HEK293 (cell line): ENCODE measurements at regions of chr10 and their contacts with region 1.

Region 1: DNA sequence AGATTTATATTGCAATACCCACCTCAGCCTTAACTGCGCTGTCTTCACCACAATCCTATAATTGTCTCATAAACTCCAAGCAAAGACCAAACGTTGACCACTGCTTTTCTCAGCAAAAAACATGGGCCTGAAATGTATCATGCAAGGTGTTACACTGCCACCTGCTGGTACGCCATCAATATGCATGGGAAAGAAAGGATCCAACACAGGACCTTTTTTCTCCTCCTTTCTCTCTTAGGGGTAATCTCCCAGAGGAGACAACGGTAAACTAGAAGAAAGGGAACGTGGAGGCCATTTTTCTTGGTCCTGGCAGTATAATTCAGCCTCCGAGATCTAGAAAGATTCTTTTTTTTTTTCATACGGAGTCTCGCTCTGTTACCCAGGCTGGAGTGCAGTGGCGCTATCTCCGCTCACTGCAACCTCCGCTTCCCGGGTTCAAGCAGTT is 79.1 kb upstream of the MPP7 start:
- H3K4me3 ChIP-seq: no peak overlapping the region
- H3K27ac ChIP-seq: no peak overlapping the region
- H3K4me1 ChIP-seq: peaks cover 6% of the 10 kb centered on the region; the same call in 1 of the 2 replicates
- CTCF ChIP-seq: peak; percentile 89

Region 2: DNA sequence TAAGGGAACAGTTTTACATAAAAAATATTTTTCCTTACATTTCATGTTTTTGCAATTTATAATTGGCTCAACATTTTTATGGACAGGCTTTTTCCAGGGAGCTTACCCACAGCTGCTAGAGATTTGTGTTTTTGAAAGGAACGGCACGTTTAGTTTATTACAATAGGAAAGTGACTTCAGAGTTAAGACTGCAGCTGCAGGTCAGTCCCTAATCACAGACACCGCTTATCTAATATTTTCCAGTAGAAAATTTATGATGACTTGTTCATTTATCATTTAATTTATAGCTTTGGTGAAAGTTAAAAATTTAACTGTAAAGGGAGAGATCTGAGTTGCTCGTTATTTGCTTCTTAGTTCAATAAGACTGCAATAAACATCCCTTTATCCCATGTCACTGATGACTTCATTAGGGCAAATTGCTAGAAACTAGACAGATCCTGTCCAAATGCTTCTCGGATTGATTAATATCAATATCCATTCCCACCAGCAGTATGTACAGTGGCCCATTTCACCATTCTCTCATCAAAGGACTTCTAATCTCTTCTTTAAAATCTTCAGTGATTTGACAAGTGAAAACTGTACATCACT is 286.0 kb before region 1 on chr10:
- CTCF ChIA-PET with region 1: no interaction called
- POLR2A ChIA-PET with region 1: no interaction called
- H3K4me3 ChIP-seq: no peak overlapping the region
- H3K27ac ChIP-seq: no peak overlapping the region
- H3K4me1 ChIP-seq: no peaks in the 10 kb centered on the region
- CTCF ChIP-seq: no peak

Region 3: DNA sequence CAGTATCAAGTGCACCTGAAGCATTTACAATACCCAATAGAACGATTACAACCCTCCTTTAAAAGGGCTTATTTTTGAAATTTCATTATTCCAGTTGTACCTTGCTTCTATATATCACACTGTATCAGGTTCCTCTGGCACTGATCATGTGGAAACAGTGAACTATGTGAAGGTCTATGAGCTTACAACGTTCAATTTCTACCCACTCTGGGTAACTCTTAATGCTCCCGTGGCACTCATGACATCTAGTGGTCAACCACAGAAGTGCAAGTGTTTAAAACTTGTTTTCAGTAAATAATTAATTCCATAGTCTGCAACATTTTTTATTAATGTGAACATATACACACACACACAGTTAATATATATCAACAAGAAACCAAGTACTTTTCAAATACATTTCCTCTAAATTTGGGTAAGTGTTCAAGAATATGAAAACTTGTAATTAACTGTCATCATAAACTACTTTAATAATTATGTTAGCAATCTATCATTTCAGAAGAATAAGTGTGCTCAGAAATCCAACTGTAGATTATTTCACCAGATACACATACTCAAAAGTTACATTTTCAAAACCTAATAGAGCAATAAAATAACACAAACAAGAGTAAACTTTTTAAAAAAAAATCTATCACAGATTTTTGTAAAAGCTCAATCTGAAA is 140.1 kb before region 1 on chr10:
- CTCF ChIA-PET with region 1: interaction called, 23 read pairs
- POLR2A ChIA-PET with region 1: no interaction called
- H3K4me3 ChIP-seq: no peak overlapping the region
- H3K27ac ChIP-seq: no peak overlapping the region
- H3K4me1 ChIP-seq: no peaks in the 10 kb centered on the region
- CTCF ChIP-seq: peak; percentile 59; the same call in 1 of the 2 replicates

Region 4: GRCh38 chr10:28250782-28251181 is 131.1 kb before region 1 on chr10:
- CTCF ChIA-PET with region 1: interaction called, 101 read pairs
- POLR2A ChIA-PET with region 1: no interaction called
- H3K4me3 ChIP-seq: no peak overlapping the region
- H3K27ac ChIP-seq: no peak overlapping the region
- H3K4me1 ChIP-seq: peaks cover 9% of the 10 kb centered on the region
- CTCF ChIP-seq: no peak

Region 5: GRCh38 chr10:28302638-28303488 is 79.1 kb before region 1 on chr10 and contains the start of gene MPP7:
- CTCF ChIA-PET with region 1: interaction called, 14 read pairs
- POLR2A ChIA-PET with region 1: interaction called, 5 read pairs
- H3K4me3 ChIP-seq: peak within 1 kb of the TSS; percentile 81
- H3K27ac ChIP-seq: peak within 1 kb of the TSS; percentile 90
- H3K4me1 ChIP-seq: peaks cover 6% of the 10 kb centered on the region; the same call in 1 of the 2 replicates
- CTCF ChIP-seq: no peak; the same call in 1 of the 2 replicates

Region 6: GRCh38 chr10:28326516-28327490 is 55.1 kb before region 1 on chr10:
- CTCF ChIA-PET with region 1: interaction called, 29 read pairs
- POLR2A ChIA-PET with region 1: no interaction called
- H3K4me3 ChIP-seq: no peak overlapping the region
- H3K27ac ChIP-seq: no peak overlapping the region; the same call in 1 of the 2 replicates
- H3K4me1 ChIP-seq: peaks cover 12% of the 10 kb centered on the region
- CTCF ChIP-seq: no peak

Region 7: GRCh38 chr10:28393966-28394568 is 12.1 kb after region 1 on chr10:
- CTCF ChIA-PET with region 1: interaction called, 43 read pairs
- POLR2A ChIA-PET with region 1: no interaction called
- H3K4me3 ChIP-seq: no peak overlapping the region
- H3K27ac ChIP-seq: no peak overlapping the region
- H3K4me1 ChIP-seq: no peaks in the 10 kb centered on the region
- CTCF ChIP-seq: peak; percentile 55; the same call in 1 of the 2 replicates

Region 8: GRCh38 chr10:28468707-28469483 is 87.0 kb after region 1 on chr10:
- CTCF ChIA-PET with region 1: no interaction called
- POLR2A ChIA-PET with region 1: no interaction called
- H3K4me3 ChIP-seq: no peak overlapping the region
- H3K27ac ChIP-seq: no peak overlapping the region
- H3K4me1 ChIP-seq: no peaks in the 10 kb centered on the region
- CTCF ChIP-seq: no peak